Left colon (tissue), 2 donors: ENCODE measurements at regions of chr6 and their contacts with region 1.

Region 1: DNA sequence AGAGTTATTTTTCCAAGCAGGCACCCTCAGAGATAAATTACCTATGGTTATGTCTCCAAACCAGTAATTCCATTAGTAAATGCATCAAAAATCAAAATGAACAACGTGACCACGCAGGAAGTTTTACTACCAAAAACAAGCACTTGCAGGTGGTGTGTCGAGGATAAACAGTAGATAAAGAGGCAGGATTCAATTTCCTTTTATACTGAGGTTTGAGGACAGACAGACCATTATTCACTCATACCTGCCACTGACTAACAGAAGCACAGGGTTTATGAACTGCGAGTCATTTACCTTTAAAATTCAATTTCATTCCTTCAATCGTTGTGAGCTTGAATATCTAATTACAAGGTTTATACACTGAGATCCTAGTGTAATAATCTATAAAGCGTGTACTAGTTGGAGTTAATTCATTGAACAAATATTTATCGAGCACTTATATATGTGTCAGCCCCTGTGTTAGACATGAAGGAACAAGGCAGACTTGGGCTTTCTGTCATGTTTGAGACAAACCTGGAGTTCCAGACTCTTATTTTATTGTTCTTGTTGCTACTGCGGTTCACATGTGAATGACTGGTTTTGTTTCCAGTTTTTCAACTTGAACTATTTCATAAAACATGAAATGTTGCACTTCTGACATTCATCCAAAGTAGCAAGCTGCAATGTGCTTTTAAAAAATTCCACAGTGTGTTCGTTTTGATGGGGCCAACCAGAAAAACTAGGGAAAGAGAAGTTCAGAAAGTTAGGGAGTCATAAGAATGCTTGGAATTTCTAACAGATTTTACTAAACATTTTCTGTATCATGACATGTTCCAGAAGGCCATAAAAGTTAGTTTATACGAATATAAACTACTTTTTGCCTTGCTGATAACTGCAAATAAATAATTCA is 205.6 kb downstream of the UST start:
- DNase-seq: no peak
- ATAC-seq: no peak

Region 2: GRCh38 chr6:148727104-148727503 is 225.3 kb before region 1 on chr6:
- intact Hi-C with region 1: no loop called
- DNase-seq: no peak
- ATAC-seq: no peak

Region 3: DNA sequence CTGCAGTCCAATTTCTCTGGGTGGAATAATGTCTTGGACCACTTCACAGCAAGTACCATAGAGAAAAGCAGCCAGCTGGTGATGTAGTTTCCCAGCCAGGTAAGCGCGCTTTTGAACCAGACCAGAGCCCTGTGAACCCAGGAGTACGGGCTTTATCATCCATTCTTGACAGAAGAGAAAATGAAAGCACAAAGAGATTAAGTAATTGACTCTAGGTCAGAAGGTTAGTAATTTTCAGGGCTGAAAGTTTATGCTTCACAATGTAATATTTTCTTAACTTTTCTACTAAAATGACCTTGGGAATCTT is 212.6 kb before region 1 on chr6:
- intact Hi-C with region 1: loop called in 1 of 2 experiments (anchors 5 kb)
- DNase-seq: no peak
- ATAC-seq: no peak

Region 4: GRCh38 chr6:148800535-148800934 is 151.9 kb before region 1 on chr6:
- intact Hi-C with region 1: no loop called
- DNase-seq: no peak
- ATAC-seq: no peak

Region 5: DNA sequence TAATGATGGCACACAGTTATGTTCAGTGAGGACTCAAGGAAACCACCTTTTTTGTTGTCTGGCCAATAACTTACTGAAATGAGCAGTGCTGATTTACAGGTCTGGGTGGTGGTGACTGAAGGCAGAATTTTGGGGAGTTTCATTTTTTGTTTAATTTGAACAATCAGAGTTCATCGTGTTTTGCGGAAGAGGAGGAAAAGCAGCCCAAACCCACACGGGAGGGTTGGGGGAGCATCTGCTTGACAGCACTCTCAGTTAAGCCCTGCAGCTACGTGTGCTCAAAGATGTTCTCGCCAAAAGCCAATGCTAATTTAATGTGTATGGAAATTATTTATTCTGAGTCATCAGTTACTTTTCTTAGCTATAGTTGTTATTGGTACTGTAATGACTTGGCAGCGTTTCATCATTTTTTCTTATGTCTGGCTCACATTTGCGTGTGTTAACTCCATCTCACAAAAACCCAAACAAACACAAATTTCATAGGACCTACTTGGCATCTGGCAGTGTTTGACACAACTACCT is 116.4 kb before region 1 on chr6:
- intact Hi-C with region 1: no loop called
- DNase-seq: no peak
- ATAC-seq: no peak